Naive thymus-derived CD4-positive, alpha-beta T cell (primary cell): ENCODE measurements at regions of chr17 and their contacts with region 1.

Region 1: GRCh38 chr17:59361916-59362810 is 30.7 kb downstream of the YPEL2 start:
- DNase-seq: peak in 8 of 9 donors; percentile 44 to 74 (median 64)
- ATAC-seq: peak; percentile 74
- H3K4me3 ChIP-seq: peak overlapping the region; percentile 43
- H3K4me3 Mint-ChIP-seq: peak overlapping the region; percentile 75 to 90 (median 80)
- H3K27ac ChIP-seq: peak overlapping the region; percentile 68
- H3K27ac Mint-ChIP-seq: peak overlapping the region; percentile 89 to 98 (median 94)
- H3K4me1 ChIP-seq: peaks cover 28 to 83% of the 10 kb centered on the region in 2 donors
- H3K4me1 Mint-ChIP-seq: peaks cover 57 to 97% (median 89%) of the 10 kb centered on the region in 7 donors
- H3K27me3 ChIP-seq: no peaks in the 10 kb centered on the region
- H3K27me3 Mint-ChIP-seq: no peaks in the 10 kb centered on the region

Region 2: DNA sequence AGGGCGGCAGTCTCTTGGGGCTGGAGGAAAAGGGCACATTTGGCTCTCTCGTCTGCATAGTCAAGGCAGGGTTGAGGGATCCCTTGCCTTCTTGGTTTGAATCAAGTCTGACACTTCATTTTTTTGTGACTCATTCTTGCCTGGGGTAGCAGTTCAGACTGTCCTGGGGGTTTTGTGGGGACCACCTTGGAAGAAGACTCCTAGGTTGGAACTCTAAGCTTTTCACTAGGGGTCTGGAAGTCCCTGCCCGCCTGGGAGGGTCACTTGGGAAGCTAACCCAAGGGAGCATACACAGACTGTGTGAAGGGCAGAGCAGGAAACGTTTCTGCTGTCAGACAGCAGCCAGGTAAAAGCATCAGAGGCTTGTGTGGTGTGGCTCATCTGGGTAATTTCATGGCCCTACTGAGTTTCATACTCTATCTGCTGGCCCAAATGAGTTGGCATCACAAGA is 19.5 kb before region 1 on chr17:
- CTCF ChIA-PET with region 1: no interaction called
- POLR2A ChIA-PET with region 1: interaction called, 16 read pairs
- intact Hi-C with region 1: loop called in 1 of 2 experiments (anchors 2 kb)
- DNase-seq: peak in 1 of 9 donors; percentile 2
- ATAC-seq: no peak
- H3K4me3 ChIP-seq: no peak overlapping the region
- H3K4me3 Mint-ChIP-seq: peak overlapping the region in 8 of 10 donors; percentile 2 to 46 (median 26)
- H3K27ac ChIP-seq: no peak overlapping the region
- H3K27ac Mint-ChIP-seq: peak overlapping the region; percentile 27 to 81 (median 60)
- H3K4me1 ChIP-seq: peaks cover 0 to 21% of the 10 kb centered on the region in 2 donors
- H3K4me1 Mint-ChIP-seq: peaks cover 23 to 81% (median 73%) of the 10 kb centered on the region in 7 donors
- H3K27me3 ChIP-seq: no peaks in the 10 kb centered on the region
- H3K27me3 Mint-ChIP-seq: peaks cover 0 to 2% (median 0%) of the 10 kb centered on the region in 5 donors

Region 3: GRCh38 chr17:59372138-59372857 is 10.1 kb after region 1 on chr17:
- CTCF ChIA-PET with region 1: interaction called, 4 read pairs
- POLR2A ChIA-PET with region 1: interaction called, 17 read pairs
- intact Hi-C with region 1: loop called (anchors 1 kb)
- DNase-seq: no peak
- ATAC-seq: peak; percentile 40
- H3K4me3 ChIP-seq: no peak overlapping the region
- H3K4me3 Mint-ChIP-seq: peak overlapping the region; percentile 16 to 75 (median 51)
- H3K27ac ChIP-seq: no peak overlapping the region
- H3K27ac Mint-ChIP-seq: peak overlapping the region; percentile 48 to 92 (median 80)
- H3K4me1 ChIP-seq: peaks cover 0 to 54% of the 10 kb centered on the region in 2 donors
- H3K4me1 Mint-ChIP-seq: peaks cover 56 to 89% (median 78%) of the 10 kb centered on the region in 7 donors
- H3K27me3 ChIP-seq: no peaks in the 10 kb centered on the region
- H3K27me3 Mint-ChIP-seq: no peaks in the 10 kb centered on the region

Region 4: DNA sequence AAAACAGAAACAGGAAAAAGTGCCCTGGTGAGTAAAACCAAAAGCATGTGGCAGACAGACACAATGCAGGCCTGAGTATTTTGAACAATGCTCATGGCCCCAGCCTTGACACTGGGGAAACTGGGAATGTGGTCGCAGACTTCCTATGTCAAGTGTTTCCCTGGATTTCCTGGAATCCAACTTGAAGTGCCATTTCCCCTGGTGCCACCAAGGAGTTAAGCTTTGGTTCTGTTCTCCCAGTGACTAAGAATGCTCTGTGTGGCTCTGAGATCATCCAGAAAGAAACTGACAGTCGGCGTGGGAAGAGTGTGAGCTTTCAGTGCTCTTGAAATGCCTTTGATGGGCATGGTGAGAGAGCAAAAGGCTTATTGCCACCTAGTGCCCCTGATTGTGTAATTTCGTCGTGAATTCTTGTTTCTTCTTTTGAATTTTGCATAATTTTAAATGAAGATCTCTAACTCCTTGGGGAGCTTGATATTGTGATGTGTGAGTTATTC is 65.3 kb after region 1 on chr17:
- CTCF ChIA-PET with region 1: no interaction called
- POLR2A ChIA-PET with region 1: interaction called, 9 read pairs
- intact Hi-C with region 1: loop called in 1 of 2 experiments (anchors 5 kb)
- DNase-seq: peak in 5 of 9 donors; percentile 15 to 49 (median 21)
- ATAC-seq: no peak
- H3K4me3 ChIP-seq: no peak overlapping the region
- H3K4me3 Mint-ChIP-seq: no peak overlapping the region
- H3K27ac ChIP-seq: no peak overlapping the region
- H3K27ac Mint-ChIP-seq: no peak overlapping the region
- H3K4me1 ChIP-seq: no peaks in the 10 kb centered on the region
- H3K4me1 Mint-ChIP-seq: peaks cover 0 to 21% (median 7%) of the 10 kb centered on the region in 7 donors
- H3K27me3 ChIP-seq: no peaks in the 10 kb centered on the region
- H3K27me3 Mint-ChIP-seq: peaks cover 0 to 5% (median 0%) of the 10 kb centered on the region in 5 donors